ENCODE measurements at regions of chr16 and their contacts with region 1.

Region 1: DNA sequence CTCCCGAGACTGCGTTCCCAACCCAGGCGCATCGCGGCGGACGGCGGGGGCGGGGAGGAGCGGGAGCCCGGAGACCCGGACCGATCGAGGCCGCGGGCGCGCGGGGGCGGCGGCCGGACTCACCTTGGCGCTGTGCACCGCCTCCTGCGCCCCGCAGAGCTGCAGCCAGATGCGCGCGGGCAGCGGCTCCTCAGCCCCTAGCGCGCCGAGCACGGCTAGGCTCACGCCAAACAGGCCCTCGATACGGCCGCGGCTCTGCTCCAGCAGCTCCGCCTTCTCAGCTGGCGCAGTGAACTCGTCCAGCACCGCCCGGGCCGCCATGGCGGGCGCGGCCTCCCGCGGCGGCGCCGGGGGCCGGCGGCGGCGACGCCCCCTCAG is 339 bp downstream of the N4BP1 start:
- DNase-seq: no peak
- ATAC-seq: peak; percentile 68
- H3K4me3 ChIP-seq: peak overlapping the region; percentile 76 to 96 (median 77)
- H3K4me3 Mint-ChIP-seq: peak overlapping the region; percentile 92
- H3K27ac ChIP-seq: peak overlapping the region in 1 of 2 donors; percentile 58
- H3K27ac Mint-ChIP-seq: peak overlapping the region; percentile 86
- H3K4me1 ChIP-seq: peaks cover 51 to 53% of the 10 kb centered on the region in 2 donors
- H3K4me1 Mint-ChIP-seq: peaks cover 38% of the 10 kb centered on the region
- H3K27me3 ChIP-seq: no peaks in the 10 kb centered on the region
- H3K27me3 Mint-ChIP-seq: no peaks in the 10 kb centered on the region
- CTCF ChIP-seq: no peak

Region 2: GRCh38 chr16:47492428-47493377 is 1116.9 kb before region 1 on chr16:
- CTCF ChIA-PET with region 1: no interaction called
- POLR2A ChIA-PET with region 1: no interaction called
- intact Hi-C with region 1: loop called (anchors 5 kb)
- DNase-seq: peak; percentile 72
- ATAC-seq: peak; percentile 85
- H3K4me3 ChIP-seq: peak overlapping the region; percentile 19 to 71 (median 37)
- H3K4me3 Mint-ChIP-seq: peak overlapping the region; percentile 96
- H3K27ac ChIP-seq: peak overlapping the region; percentile 81 to 85
- H3K27ac Mint-ChIP-seq: peak overlapping the region; percentile 98
- H3K4me1 ChIP-seq: peaks cover 37 to 40% of the 10 kb centered on the region in 2 donors
- H3K4me1 Mint-ChIP-seq: peaks cover 55% of the 10 kb centered on the region
- H3K27me3 ChIP-seq: no peaks in the 10 kb centered on the region
- H3K27me3 Mint-ChIP-seq: no peaks in the 10 kb centered on the region
- CTCF ChIP-seq: no peak

Region 3: DNA sequence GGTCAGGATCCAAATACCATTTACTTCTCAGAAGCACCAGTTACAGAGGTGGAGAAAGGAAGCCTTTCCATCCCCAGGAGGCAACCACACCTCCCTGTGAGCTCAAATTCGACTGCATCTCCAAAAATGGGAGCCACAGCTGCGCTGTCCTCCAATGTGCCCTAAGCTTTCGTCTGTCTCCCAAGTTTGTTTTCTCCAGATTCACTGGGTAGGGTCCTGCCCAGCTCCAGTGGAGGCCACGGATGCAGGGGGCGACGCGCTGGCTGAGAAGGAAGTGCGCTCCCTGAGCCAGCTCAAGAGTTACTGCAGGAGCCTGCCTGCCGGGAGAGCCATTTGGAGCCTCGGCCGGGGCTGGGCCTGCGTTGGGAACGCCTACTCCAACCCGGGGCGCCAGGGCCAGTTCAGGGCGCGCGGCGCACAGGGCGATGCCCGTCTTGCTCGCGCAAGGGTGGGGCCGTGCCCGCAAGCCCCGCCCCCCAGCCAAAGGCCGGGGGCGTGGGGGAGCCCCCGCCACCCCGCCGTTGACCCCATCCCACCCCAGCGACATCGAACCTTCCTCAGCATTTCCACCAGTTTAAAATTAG is 244.0 kb before region 1 on chr16:
- CTCF ChIA-PET with region 1: no interaction called
- POLR2A ChIA-PET with region 1: no interaction called
- intact Hi-C with region 1: loop called (anchors 2 kb)
- DNase-seq: peak; percentile 78
- ATAC-seq: peak; percentile 96
- H3K4me3 ChIP-seq: peak overlapping the region; percentile 58 to 96 (median 79)
- H3K4me3 Mint-ChIP-seq: peak overlapping the region; percentile 90
- H3K27ac ChIP-seq: peak overlapping the region; percentile 80 to 92
- H3K27ac Mint-ChIP-seq: peak overlapping the region; percentile 83
- H3K4me1 ChIP-seq: peaks cover 22 to 24% of the 10 kb centered on the region in 2 donors
- H3K4me1 Mint-ChIP-seq: peaks cover 60% of the 10 kb centered on the region
- H3K27me3 ChIP-seq: no peaks in the 10 kb centered on the region
- H3K27me3 Mint-ChIP-seq: no peaks in the 10 kb centered on the region
- CTCF ChIP-seq: no peak

Region 4: DNA sequence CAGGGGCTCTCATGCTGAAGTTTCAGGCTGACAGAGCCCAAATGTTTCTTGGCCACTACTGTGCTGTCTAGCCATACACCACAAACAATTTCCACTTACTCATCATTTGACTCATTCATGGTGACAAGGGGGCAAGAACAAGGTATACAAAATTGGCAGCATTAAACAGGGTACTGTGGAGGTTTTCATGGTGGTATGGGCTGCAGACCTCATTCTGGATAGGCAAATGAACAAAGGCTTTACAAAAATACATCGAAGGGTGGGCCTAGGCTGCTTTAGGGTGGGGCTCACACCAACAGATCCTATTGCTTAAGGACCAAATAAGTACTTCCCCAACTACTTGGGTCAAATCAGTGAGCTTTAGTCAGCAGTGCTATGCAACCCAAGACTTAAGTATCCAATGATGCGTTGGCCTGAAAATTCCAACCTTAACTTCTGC is 52.7 kb before region 1 on chr16:
- CTCF ChIA-PET with region 1: interaction called, 3 read pairs
- POLR2A ChIA-PET with region 1: no interaction called
- intact Hi-C with region 1: loop called (anchors 10 kb)
- DNase-seq: no peak
- ATAC-seq: no peak
- H3K4me3 ChIP-seq: no peak overlapping the region
- H3K4me3 Mint-ChIP-seq: no peak overlapping the region
- H3K27ac ChIP-seq: no peak overlapping the region
- H3K27ac Mint-ChIP-seq: peak overlapping the region; percentile 42
- H3K4me1 ChIP-seq: peaks cover 0 to 10% of the 10 kb centered on the region in 2 donors
- H3K4me1 Mint-ChIP-seq: peaks cover 28% of the 10 kb centered on the region
- H3K27me3 ChIP-seq: no peaks in the 10 kb centered on the region
- H3K27me3 Mint-ChIP-seq: no peaks in the 10 kb centered on the region
- CTCF ChIP-seq: no peak

Region 5: DNA sequence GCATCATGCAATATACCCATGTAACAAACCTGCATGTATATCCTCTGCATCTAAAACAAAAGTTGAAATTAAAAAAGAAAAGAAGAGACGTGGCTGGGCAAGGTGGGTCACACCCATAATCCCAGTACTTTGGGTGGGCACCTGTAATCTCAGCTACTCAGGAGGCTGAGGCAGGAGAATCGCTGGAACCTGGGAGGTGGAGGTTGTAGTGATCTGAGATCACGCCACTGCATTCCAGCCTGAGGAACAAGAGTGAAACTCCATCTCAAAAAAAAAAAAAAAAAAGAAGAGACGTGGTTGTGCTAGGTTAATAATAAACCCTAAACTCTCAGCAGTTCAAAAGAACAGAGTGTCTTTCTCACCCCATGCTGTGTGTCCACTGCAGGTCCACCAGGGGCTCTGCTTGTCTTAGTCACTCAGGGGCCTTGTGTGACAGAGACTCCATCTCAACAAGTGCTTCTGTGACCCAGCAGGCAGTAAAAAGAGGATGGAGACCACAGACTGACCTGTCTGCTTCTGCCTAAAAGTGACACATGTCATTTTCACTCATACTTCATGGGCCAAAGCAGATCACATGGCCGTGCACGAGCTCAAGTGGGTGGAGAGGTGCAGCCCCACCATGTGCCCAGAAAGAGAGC is 22.6 kb after region 1 on chr16:
- CTCF ChIA-PET with region 1: interaction called, 12 read pairs
- POLR2A ChIA-PET with region 1: no interaction called
- intact Hi-C with region 1: no loop called
- DNase-seq: no peak
- ATAC-seq: no peak
- H3K4me3 ChIP-seq: no peak overlapping the region
- H3K4me3 Mint-ChIP-seq: no peak overlapping the region
- H3K27ac ChIP-seq: no peak overlapping the region
- H3K27ac Mint-ChIP-seq: no peak overlapping the region
- H3K4me1 ChIP-seq: peaks cover 0 to 7% of the 10 kb centered on the region in 2 donors
- H3K4me1 Mint-ChIP-seq: peaks cover 6% of the 10 kb centered on the region
- H3K27me3 ChIP-seq: no peaks in the 10 kb centered on the region
- H3K27me3 Mint-ChIP-seq: peaks cover 19% of the 10 kb centered on the region
- CTCF ChIP-seq: no peak